GM12878 (cell line): ENCODE measurements at regions of chr1 and their contacts with region 1.

Region 1: DNA sequence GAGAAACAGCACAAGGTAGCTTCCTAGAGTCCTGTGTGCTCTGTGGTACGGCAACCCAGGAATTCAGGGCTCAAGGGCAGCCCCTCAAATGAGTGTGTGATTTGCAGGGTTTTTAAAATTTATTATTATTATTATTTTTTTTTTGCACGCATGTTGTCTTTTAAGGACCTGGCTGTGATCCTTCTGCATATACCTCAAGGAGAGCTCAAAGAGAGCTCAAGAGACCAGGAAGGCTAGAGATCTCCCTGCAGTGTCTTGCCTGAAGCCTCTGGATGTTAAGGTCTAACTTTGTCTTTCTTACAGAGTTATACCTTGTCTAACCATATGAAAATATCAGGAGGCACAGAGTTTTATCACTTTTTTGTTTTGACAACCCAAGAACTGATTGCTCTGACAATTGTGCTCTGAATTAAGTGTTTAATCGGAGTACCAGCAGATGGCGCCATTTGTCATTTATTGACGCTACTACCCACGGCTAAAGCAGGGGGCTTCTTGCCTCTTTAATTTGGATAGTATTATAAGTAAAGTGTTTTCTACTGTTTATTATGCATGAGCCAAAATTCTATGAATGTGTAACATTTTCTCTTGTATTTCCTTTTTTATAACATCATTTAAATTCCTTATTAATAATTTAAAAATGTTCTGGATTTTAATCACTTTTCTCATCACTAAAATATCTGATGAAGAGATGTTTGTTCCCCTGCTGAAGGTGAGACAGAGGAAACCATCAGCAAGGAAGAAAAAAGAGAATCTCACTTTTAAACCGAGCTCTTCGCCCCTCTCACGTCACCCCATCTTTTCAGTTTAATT is 35.8 kb upstream of the LMO4 start:
- DNase-seq: no peak
- ATAC-seq: peak; percentile 87
- H3K4me3 ChIP-seq: no peak overlapping the region
- H3K27ac ChIP-seq: no peak overlapping the region
- H3K4me1 ChIP-seq: no peaks in the 10 kb centered on the region
- H3K27me3 ChIP-seq: no peaks in the 10 kb centered on the region
- CTCF ChIP-seq: peak; percentile 61 to 76 (median 74)
- EP300 ChIP-seq: no peak
- POLR2A ChIP-seq: no peak
- RAD21 ChIP-seq: peak; percentile 86

Region 2: DNA sequence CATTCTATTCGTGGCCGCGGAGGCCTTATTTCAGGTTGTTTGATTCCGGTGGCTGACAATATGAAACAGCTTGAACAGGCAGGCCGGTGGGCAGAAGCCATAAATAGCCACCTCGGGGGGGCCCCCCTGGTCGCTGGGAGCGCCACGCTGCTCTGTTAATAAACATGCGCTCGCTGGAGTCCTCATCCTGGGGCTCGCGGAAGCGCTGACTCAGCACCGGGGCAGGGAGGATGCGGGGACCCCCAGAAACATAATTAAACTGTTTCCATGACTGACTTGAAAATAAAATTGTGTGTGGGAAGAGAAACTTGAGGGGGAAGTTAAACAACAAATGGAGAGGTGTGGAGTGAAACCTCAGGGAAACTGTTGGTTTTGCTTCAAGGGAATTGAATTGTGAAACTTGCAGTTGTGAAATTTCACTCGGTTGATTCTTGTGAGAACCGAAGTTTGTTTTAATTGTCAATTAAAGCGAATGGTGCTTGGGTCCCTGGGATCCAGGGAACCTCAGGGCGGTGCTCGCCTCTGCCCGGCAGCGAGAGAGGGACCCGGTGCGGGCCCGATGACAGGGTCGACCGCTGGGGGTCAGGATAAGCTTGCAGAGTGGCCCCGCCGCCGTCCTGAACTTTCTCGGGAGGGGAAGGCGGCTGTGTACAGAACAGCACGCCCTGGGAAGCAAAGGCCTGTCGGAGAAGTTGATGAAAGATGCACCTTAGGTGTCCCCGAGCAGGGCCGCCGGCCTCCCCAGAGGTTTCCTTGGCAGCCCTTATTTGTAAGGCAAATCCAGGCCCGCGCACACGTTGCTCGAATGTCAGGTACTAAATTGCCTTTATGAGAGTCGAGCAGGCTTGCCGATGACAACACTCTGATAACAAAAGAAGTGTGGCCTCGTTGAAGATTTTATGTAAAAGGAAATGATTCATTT is 141.1 kb before region 1 on chr1:
- CTCF ChIA-PET with region 1: interaction called, 9 read pairs
- POLR2A ChIA-PET with region 1: no interaction called
- RAD21 ChIA-PET with region 1: interaction called, 8 read pairs
- SMC1A ChIA-PET with region 1: interaction called, 25 read pairs
- in situ Hi-C with region 1: no loop called
- intact Hi-C with region 1: loop called (anchors 5 kb)
- DNase-seq: peak; percentile 75
- ATAC-seq: peak; percentile 84
- H3K4me3 ChIP-seq: peak overlapping the region; percentile 47; the same call in 1 of the 2 replicates
- H3K27ac ChIP-seq: peak overlapping the region; percentile 13; the same call in 1 of the 2 replicates
- H3K4me1 ChIP-seq: peaks cover 17% of the 10 kb centered on the region
- H3K27me3 ChIP-seq: no peaks in the 10 kb centered on the region
- CTCF ChIP-seq: peak; percentile 52 to 82 (median 69)
- EP300 ChIP-seq: peak; percentile 6 to 10; a peak in 2 of 4 replicates
- POLR2A ChIP-seq: no peak
- RAD21 ChIP-seq: peak; percentile 67

Region 3: DNA sequence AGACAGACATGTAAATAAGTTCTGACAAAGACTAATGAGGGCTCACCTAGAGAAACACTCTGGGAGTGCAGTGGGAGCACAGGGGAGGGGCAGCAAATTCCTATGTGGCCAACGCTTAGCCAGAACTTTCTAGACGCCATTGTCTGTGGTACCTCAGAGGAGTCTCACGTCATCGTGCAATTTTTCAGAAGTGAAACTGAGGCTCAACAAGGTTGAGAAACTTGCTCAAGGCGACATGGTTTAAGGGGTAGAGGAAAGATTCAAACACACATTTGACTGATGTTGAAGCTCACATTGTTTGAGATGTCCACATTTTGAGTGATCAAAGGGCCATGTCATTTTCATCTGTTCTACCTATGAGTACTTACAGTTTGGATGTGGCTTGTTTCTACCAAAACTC is 116.8 kb before region 1 on chr1:
- CTCF ChIA-PET with region 1: no interaction called
- POLR2A ChIA-PET with region 1: no interaction called
- RAD21 ChIA-PET with region 1: no interaction called
- SMC1A ChIA-PET with region 1: no interaction called
- in situ Hi-C with region 1: no loop called
- intact Hi-C with region 1: no loop called
- DNase-seq: no peak
- ATAC-seq: peak; percentile 58
- H3K4me3 ChIP-seq: no peak overlapping the region
- H3K27ac ChIP-seq: no peak overlapping the region
- H3K4me1 ChIP-seq: no peaks in the 10 kb centered on the region
- H3K27me3 ChIP-seq: peaks cover 0 to 2% of the 10 kb centered on the region in 2 experiments; a peak in 2 of 4 replicates
- CTCF ChIP-seq: no peak
- EP300 ChIP-seq: no peak
- POLR2A ChIP-seq: no peak
- RAD21 ChIP-seq: no peak

Region 4: GRCh38 chr1:87266284-87266683 is 26.6 kb before region 1 on chr1:
- CTCF ChIA-PET with region 1: no interaction called
- POLR2A ChIA-PET with region 1: no interaction called
- RAD21 ChIA-PET with region 1: no interaction called
- SMC1A ChIA-PET with region 1: no interaction called
- in situ Hi-C with region 1: no loop called
- intact Hi-C with region 1: no loop called
- DNase-seq: no peak
- ATAC-seq: no peak
- H3K4me3 ChIP-seq: no peak overlapping the region
- H3K27ac ChIP-seq: no peak overlapping the region
- H3K4me1 ChIP-seq: no peaks in the 10 kb centered on the region
- H3K27me3 ChIP-seq: peaks cover 2% of the 10 kb centered on the region in 2 experiments; a peak in 1 of 4 replicates
- CTCF ChIP-seq: no peak
- EP300 ChIP-seq: no peak
- POLR2A ChIP-seq: no peak
- RAD21 ChIP-seq: no peak

Region 5: DNA sequence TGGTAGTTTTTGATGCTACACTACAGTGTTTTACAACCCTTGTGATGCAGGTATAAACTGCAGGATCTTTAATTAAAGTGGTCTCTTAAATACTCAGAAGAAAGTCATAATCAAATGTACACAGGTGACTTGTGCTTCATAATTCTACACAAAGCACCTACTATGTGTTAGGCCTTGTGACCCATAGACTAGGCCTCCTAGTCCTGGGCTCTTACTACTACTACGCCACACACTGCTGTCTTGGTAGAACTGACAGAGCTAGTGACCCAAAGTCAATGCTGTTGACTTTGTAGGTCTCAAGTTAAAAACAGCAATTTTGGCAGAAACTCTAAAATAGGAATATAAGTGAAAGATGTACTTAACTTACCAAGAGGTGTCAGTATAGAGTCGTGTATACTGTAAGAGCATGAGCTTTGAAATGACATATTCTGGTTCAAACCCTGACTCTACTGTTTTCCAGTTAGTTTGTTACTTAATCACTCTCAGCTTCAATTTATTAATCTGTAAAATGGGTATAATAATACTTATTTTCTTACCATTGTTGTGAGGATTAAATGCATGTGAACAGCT is 12.8 kb before region 1 on chr1:
- CTCF ChIA-PET with region 1: interaction called, 13 read pairs
- POLR2A ChIA-PET with region 1: no interaction called
- RAD21 ChIA-PET with region 1: interaction called, 4 read pairs
- SMC1A ChIA-PET with region 1: interaction called, 6 read pairs
- in situ Hi-C with region 1: no loop called
- intact Hi-C with region 1: no loop called
- DNase-seq: no peak
- ATAC-seq: peak; percentile 52; the same call in 2 of the 3 replicates
- H3K4me3 ChIP-seq: no peak overlapping the region
- H3K27ac ChIP-seq: no peak overlapping the region
- H3K4me1 ChIP-seq: no peaks in the 10 kb centered on the region
- H3K27me3 ChIP-seq: 0 out of 4 replicates have a peak, but pooled peaks cover 0 to 2% of the 10 kb centered on the region in 2 experiments
- CTCF ChIP-seq: peak; percentile 16 to 34 (median 20); a peak in 2 of 6 replicates
- EP300 ChIP-seq: no peak
- POLR2A ChIP-seq: no peak
- RAD21 ChIP-seq: no peak

Region 6: DNA sequence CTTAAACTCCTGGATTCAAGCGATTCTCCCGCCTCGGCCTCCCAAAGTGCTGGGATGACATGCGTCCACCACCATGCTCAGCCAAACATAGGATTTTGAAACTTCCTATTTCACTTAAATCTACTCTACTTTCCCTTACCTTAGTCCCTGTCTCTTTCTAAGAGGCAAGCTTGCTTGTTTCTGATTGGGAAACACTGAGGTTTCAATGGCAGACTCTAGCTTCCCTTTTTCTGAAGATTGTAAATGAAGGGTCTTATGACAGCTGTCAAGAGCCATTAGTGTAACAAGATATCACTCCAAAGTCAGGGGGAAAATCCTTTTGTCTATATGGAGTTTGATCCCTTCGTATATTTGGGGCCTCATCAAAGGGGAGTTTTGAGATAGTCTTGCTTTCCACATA is 12.3 kb after region 1 on chr1:
- CTCF ChIA-PET with region 1: interaction called, 10 read pairs
- POLR2A ChIA-PET with region 1: no interaction called
- RAD21 ChIA-PET with region 1: no interaction called
- SMC1A ChIA-PET with region 1: interaction called, 3 read pairs
- in situ Hi-C with region 1: no loop called
- intact Hi-C with region 1: no loop called
- DNase-seq: no peak
- ATAC-seq: no peak
- H3K4me3 ChIP-seq: no peak overlapping the region
- H3K27ac ChIP-seq: no peak overlapping the region
- H3K4me1 ChIP-seq: no peaks in the 10 kb centered on the region
- H3K27me3 ChIP-seq: peaks cover 0 to 5% of the 10 kb centered on the region in 2 experiments; a peak in 2 of 4 replicates
- CTCF ChIP-seq: no peak
- EP300 ChIP-seq: no peak
- POLR2A ChIP-seq: no peak
- RAD21 ChIP-seq: no peak

Region 7: DNA sequence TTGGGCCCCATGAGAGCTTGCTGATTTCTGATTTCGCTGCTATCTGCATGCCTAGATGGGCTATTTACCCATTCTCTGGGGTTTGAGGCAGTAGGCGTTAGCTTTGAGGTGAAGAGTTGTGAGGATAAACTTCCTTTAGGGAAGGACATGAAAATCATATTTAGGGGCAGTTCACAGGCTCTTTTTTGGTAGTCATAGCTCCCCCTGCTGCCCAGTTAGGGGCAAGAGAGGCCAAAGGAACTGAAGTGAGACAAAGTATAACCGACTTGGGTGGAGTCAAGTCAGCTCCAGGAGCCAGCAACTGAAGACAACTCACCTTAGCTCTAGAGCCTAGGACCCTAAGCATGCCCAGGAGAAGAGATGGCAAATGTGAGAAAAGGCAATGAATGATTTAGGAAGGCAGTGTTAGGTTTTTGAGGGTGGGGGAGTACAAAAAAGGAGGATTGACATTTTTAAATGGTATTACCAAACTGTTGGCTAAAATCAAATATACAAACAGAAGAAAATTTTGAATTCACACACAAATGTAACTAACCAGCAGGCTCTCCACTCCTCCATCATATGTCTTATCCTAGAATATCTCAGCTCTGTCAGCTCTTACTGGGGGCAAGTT is 660.9 kb after region 1 on chr1:
- CTCF ChIA-PET with region 1: interaction called, 46 read pairs
- POLR2A ChIA-PET with region 1: interaction called, 4 read pairs
- RAD21 ChIA-PET with region 1: interaction called, 14 read pairs
- SMC1A ChIA-PET with region 1: interaction called, 30 read pairs
- in situ Hi-C with region 1: loop called (anchors 10 kb)
- intact Hi-C with region 1: loop called (anchors 1 kb)
- DNase-seq: no peak
- ATAC-seq: peak; percentile 95
- H3K4me3 ChIP-seq: no peak overlapping the region
- H3K27ac ChIP-seq: no peak overlapping the region
- H3K4me1 ChIP-seq: no peaks in the 10 kb centered on the region
- H3K27me3 ChIP-seq: no peaks in the 10 kb centered on the region; a peak in 1 of 4 replicates
- CTCF ChIP-seq: peak; percentile 75 to 85 (median 76)
- EP300 ChIP-seq: no peak
- POLR2A ChIP-seq: no peak
- RAD21 ChIP-seq: peak; percentile 89

Region 8: GRCh38 chr1:88061492-88062177 is 768.7 kb after region 1 on chr1:
- CTCF ChIA-PET with region 1: interaction called, 15 read pairs
- POLR2A ChIA-PET with region 1: no interaction called
- RAD21 ChIA-PET with region 1: interaction called, 6 read pairs
- SMC1A ChIA-PET with region 1: interaction called, 9 read pairs
- in situ Hi-C with region 1: no loop called
- intact Hi-C with region 1: loop called (anchors 5 kb)
- DNase-seq: no peak
- ATAC-seq: peak; percentile 87
- H3K4me3 ChIP-seq: no peak overlapping the region
- H3K27ac ChIP-seq: no peak overlapping the region
- H3K4me1 ChIP-seq: no peaks in the 10 kb centered on the region
- H3K27me3 ChIP-seq: no peaks in the 10 kb centered on the region
- CTCF ChIP-seq: peak; percentile 57 to 63 (median 58)
- EP300 ChIP-seq: no peak
- POLR2A ChIP-seq: no peak
- RAD21 ChIP-seq: peak; percentile 63

Region 9: DNA sequence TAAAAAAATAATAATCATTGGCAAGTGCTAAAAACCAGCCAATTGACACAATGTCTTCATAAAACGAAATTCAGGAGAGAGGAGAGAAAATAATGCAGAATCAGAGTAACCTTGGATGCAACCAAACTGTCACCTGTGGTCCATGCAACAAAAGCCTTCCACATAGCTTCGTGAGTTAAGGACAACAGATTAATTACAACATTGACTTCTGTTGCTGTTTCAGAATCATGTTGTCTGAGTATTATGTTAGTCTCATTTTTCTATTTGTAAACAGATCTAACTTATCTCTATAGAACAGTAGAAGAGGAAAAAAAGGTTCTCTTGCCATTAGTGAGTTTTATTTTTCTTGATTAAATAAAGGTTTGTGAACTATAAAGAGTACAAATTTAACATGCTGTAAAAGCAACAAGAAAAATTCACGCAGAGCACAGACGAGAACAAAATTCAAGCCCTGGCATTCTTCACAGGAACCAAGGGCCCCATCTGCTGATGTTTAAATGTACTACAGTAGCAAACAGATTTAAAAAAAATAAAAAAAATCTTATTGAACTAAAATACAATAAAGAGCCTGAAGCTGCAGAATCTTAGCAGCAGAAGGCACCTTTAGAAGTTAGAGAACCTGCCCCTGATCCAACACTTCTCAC is 1010.1 kb after region 1 on chr1:
- CTCF ChIA-PET with region 1: no interaction called
- POLR2A ChIA-PET with region 1: no interaction called
- RAD21 ChIA-PET with region 1: interaction called, 4 read pairs
- SMC1A ChIA-PET with region 1: no interaction called
- in situ Hi-C with region 1: no loop called
- intact Hi-C with region 1: loop called (anchors 5 kb)
- DNase-seq: no peak
- ATAC-seq: 0 out of 3 replicates have a peak, but pooled peaks have one; percentile 28
- H3K4me3 ChIP-seq: no peak overlapping the region
- H3K27ac ChIP-seq: no peak overlapping the region
- H3K4me1 ChIP-seq: no peaks in the 10 kb centered on the region
- H3K27me3 ChIP-seq: no peaks in the 10 kb centered on the region
- CTCF ChIP-seq: peak in 2 of 3 experiments; percentile 16 to 44; a peak in 2 of 6 replicates
- EP300 ChIP-seq: no peak
- POLR2A ChIP-seq: no peak
- RAD21 ChIP-seq: peak; percentile 63